WTC11 (cell line): ENCODE measurements at regions of chr5 and their contacts with region 1.

Region 1: DNA sequence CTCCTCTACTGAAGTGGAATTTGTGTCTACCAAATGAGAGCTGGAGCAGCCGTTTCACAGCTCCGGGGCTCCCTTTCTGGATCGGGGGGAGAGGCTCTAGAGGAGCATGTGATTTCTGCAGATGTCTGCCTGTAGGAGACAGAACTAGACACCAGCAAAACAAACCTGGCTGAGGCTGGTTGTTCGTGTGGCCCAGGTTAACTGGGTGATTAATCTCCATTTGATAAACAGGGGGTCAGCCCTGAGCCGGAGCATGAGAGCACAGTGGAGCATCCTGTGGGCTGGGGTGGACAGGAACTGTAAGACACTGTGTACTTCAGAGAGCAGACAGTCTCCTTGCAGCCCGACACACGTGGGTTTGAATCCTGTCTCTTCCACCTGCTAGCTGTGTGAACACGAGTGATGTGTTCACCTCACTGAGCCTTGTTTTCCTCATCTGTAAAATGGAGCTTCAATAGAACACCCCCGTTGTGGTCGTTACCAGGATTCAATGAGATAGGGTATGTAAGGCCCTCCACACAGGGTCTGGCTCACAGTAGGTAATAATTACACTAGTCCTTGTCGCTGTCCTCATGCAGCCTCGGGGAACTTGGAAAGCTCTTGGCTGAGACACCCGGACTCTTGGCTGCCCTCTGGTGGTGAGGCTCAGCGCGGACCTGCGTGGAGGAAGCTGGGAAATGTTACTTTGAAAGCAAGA is 12.9 kb downstream of the CXCL14 start:
- DNase-seq: peak; percentile 88
- ATAC-seq: peak; percentile 64
- H3K4me3 Mint-ChIP-seq: no peak overlapping the region
- H3K27ac Mint-ChIP-seq: no peak overlapping the region
- H3K4me1 Mint-ChIP-seq: peaks cover 37% of the 10 kb centered on the region
- H3K27me3 Mint-ChIP-seq: peaks cover 17% of the 10 kb centered on the region
- CTCF ChIP-seq: peak; percentile 77; the same call in 1 of the 2 replicates

Region 2: DNA sequence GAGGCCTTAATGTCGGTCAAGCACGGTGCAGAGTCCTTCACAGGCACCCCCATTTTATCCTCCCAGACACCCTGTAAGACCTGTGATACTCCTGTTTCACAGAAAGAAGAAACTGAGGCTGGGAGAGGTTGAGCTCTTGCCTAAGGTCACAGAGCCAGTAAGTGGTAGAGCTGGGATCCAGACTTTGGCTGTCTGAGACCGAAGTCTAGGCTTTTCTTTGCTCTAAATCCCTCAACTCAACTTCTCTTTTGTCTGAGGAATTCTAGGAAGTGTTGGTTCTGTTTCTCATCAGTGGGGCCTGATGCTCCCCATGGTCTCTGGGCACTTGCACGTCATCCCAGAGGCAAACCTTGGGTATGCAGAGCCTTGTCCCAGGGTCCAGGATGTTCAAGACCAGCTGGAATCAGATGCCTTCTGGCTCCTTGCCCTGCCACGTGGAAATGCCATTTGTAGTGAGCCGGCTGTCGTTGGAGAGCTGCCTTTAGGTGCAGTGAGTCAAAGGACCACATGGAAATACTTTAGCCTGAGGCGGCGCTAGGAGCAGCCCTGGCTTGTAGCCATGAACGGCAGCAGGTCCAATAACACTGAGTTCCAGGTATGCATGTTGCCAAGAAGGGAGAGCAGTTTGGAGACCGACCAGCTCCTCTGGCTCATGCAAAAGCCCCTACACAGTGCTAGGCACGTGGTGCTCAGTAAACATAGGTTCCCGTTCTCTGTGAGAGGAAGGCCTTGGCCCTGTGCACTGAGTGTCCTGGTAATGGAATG is 127.9 kb before region 1 on chr5:
- CTCF ChIA-PET with region 1: no interaction called
- POLR2A ChIA-PET with region 1: no interaction called
- DNase-seq: no peak
- ATAC-seq: no peak
- H3K4me3 Mint-ChIP-seq: no peak overlapping the region
- H3K27ac Mint-ChIP-seq: no peak overlapping the region
- H3K4me1 Mint-ChIP-seq: peaks cover 9% of the 10 kb centered on the region
- H3K27me3 Mint-ChIP-seq: no peaks in the 10 kb centered on the region
- CTCF ChIP-seq: no peak

Region 3: DNA sequence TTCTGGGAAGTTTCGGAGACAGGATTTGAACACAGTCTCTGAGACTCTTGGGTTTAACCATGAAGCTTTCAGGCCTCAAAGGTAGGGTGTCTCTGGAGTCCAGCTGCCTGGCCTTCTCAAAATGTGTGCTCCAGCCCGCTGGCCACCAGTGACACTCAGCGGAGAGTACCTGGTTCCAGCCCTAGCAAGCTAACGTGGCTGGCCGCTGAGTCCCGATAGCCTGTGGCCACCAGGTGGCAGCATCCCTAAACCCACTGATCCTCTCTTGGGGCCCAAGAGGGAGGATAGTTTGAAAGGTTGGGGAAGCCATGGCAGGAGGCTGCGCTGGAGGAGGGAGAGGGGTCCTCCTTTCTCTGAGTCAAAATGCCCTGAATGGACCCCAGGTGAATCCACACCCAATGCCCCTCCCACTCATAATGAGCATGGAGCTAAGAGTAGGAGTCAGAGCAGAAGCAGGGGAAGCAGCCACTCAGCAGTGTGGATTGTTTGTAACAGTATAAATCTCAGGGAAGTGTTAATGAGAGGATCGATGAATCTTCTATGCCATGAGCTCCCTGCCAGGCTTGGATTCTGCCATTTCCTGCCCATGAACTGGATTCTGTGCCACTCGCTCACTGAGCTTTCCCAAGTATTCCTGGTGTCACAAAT is 108.3 kb before region 1 on chr5:
- CTCF ChIA-PET with region 1: interaction called, 324 read pairs
- POLR2A ChIA-PET with region 1: no interaction called
- DNase-seq: peak; percentile 88
- ATAC-seq: peak; percentile 81
- H3K4me3 Mint-ChIP-seq: no peak overlapping the region
- H3K27ac Mint-ChIP-seq: no peak overlapping the region
- H3K4me1 Mint-ChIP-seq: peaks cover 3% of the 10 kb centered on the region; the same call in 1 of the 2 replicates
- H3K27me3 Mint-ChIP-seq: peaks cover 51% of the 10 kb centered on the region
- CTCF ChIP-seq: peak; percentile 73

Region 4: GRCh38 chr5:135535820-135536801 is 29.8 kb before region 1 on chr5 and contains the start of gene NEUROG1:
- CTCF ChIA-PET with region 1: interaction called, 12 read pairs
- POLR2A ChIA-PET with region 1: no interaction called
- DNase-seq: peak; percentile 92
- ATAC-seq: peak; percentile 67
- H3K4me3 Mint-ChIP-seq: peak within 1 kb of the TSS; percentile 64
- H3K27ac Mint-ChIP-seq: no peak within 1 kb of the TSS
- H3K4me1 Mint-ChIP-seq: peaks cover 15% of the 10 kb centered on the region
- H3K27me3 Mint-ChIP-seq: peaks cover 100% of the 10 kb centered on the region
- CTCF ChIP-seq: no peak
- total RNA-seq, gene NEUROG1: 0.13 to 0.18 TPM in 2 of 3 replicates, not detected in the other

Region 5: GRCh38 chr5:135591277-135591676 is 25.4 kb after region 1 on chr5:
- CTCF ChIA-PET with region 1: interaction called, 15 read pairs
- POLR2A ChIA-PET with region 1: no interaction called
- DNase-seq: no peak
- ATAC-seq: no peak
- H3K4me3 Mint-ChIP-seq: no peak overlapping the region
- H3K27ac Mint-ChIP-seq: no peak overlapping the region
- H3K4me1 Mint-ChIP-seq: no peaks in the 10 kb centered on the region
- H3K27me3 Mint-ChIP-seq: no peaks in the 10 kb centered on the region; the same call in 1 of the 2 replicates
- CTCF ChIP-seq: no peak

Region 6: GRCh38 chr5:135719428-135720063 is 153.7 kb after region 1 on chr5:
- CTCF ChIA-PET with region 1: interaction called, 26 read pairs
- POLR2A ChIA-PET with region 1: no interaction called
- DNase-seq: no peak
- ATAC-seq: no peak
- H3K4me3 Mint-ChIP-seq: no peak overlapping the region
- H3K27ac Mint-ChIP-seq: no peak overlapping the region
- H3K4me1 Mint-ChIP-seq: peaks cover 22% of the 10 kb centered on the region
- H3K27me3 Mint-ChIP-seq: no peaks in the 10 kb centered on the region; the same call in 1 of the 2 replicates
- CTCF ChIP-seq: no peak

Region 7: GRCh38 chr5:135821061-135821801 is 255.4 kb after region 1 on chr5:
- CTCF ChIA-PET with region 1: interaction called, 13 read pairs
- POLR2A ChIA-PET with region 1: no interaction called
- DNase-seq: no peak
- ATAC-seq: peak; percentile 80
- H3K4me3 Mint-ChIP-seq: no peak overlapping the region
- H3K27ac Mint-ChIP-seq: no peak overlapping the region
- H3K4me1 Mint-ChIP-seq: peaks cover 21% of the 10 kb centered on the region
- H3K27me3 Mint-ChIP-seq: peaks cover 2% of the 10 kb centered on the region; the same call in 1 of the 2 replicates
- CTCF ChIP-seq: no peak

Region 8: DNA sequence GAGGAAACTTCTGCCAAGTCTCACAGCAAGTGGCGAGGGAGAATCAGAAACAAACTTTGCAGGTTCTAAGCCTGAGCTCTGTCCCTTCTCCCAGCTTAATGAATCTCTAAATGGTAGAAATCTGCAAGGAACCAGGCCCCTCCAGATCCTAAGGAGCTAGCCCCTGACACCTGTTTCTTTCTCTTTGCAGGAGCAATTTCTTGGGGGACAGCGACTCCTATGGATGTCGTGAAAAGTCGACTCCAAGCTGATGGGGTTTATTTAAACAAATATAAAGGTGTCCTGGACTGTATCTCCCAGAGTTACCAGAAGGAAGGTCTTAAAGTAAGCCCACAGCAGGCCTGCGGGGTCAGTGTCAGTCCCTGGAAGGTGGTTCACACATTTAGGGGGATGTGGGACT is 308.0 kb after region 1 on chr5:
- CTCF ChIA-PET with region 1: interaction called, 11 read pairs
- POLR2A ChIA-PET with region 1: no interaction called
- DNase-seq: no peak
- ATAC-seq: no peak
- H3K4me3 Mint-ChIP-seq: no peak overlapping the region
- H3K27ac Mint-ChIP-seq: no peak overlapping the region
- H3K4me1 Mint-ChIP-seq: no peaks in the 10 kb centered on the region
- H3K27me3 Mint-ChIP-seq: no peaks in the 10 kb centered on the region; the same call in 1 of the 2 replicates
- CTCF ChIP-seq: no peak